Aorta (tissue), 5 donors: ENCODE measurements at regions of chr14 and their contacts with region 1.

Region 1: DNA sequence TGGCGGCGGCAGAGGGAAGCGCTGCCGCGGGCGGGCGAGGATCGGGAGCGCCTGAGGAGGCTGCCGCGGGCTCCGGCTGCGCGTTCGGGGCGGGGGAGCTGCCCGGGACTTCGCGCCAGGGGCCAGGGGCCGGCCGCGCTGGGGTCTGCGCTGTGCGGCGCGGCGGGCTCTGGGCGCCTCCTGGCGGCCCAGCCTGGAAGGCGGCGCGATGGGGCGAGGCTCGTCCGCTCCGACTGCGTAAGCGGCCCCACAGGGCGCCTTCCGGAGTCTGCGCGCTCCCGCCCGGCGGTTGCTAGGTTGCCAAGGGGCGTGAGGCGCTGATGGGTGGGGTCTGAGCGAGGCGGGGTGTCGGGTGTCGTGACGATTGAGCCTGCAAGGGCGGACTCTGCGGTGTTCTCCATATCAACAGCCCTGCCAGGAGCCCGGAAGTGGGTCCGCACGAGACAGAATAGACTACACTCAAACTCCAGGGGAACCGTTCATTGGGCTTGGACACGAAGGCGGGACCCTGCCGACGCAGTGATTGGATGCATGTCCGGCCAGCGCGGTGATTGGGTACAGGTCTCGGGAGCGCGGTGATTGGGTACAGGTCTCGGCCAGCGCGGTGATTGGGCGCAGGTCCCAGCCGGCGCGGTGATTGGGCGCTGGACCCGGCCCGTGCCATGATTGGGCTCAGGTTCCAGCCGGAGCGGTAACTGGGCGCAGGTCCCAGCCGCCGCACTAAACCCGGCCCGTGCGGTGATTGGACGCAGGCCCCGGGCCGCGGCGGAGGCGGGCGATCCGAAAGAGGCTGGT is at the start of gene TEDC1:
- DNase-seq: peak; percentile 99 to 100
- ATAC-seq: peak; percentile 88
- H3K4me3 ChIP-seq: peak within 1 kb of the TSS; percentile 15 to 30
- H3K27ac ChIP-seq: peak within 1 kb of the TSS in 1 of 2 donors; percentile 87
- H3K4me1 ChIP-seq: no peaks in the 10 kb centered on the region
- H3K27me3 ChIP-seq: no peaks in the 10 kb centered on the region
- total RNA-seq, gene TEDC1: 8.6 to 30.5 TPM

Region 2: DNA sequence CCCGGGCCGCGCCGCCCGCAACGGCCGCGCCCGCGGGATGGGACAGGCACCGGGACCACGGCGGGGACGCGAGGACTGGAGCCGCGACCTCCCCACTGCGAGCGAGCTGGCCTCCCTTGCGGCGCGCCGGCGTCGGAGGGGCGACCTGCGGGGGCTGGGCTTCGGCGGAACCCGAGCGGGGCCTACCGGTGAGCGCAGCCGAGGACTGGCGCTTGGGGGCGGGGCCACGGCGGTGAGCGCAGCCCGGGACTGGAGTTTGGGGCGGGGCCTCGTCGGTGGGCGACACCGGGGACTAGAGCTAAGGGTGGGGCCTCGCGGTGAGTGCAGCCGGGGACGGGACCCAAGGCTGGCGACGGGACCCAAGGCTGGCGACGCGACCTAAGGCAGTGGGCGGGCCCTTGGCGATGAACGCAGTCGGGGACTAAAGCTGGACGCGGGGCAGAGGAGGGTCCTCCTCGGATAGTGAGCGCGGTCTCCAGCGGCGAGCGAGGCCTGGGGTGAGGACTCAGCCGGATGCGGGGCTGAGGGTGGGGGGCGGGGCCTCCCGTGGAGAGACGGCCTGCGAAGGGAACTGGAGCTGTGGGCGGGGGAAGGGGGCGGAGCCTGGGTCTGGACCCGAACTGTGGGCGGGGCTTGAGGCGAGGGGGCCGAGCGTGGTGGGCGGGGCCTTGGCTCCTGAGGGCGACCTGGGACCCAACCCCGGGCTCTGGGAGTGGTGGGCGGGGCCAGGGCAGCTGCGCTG is 189.8 kb before region 1 on chr14 and contains the start of gene BRF1:
- intact Hi-C with region 1: loop called in 1 of 2 experiments (anchors 5 kb)
- DNase-seq: peak; percentile 98 to 100
- ATAC-seq: peak; percentile 97
- H3K4me3 ChIP-seq: peak within 1 kb of the TSS; percentile 52 to 76
- H3K27ac ChIP-seq: peak within 1 kb of the TSS in 1 of 2 donors; percentile 83
- H3K4me1 ChIP-seq: no peaks in the 10 kb centered on the region
- H3K27me3 ChIP-seq: no peaks in the 10 kb centered on the region
- total RNA-seq, gene BRF1: 25.2 to 44.3 TPM

Region 3: DNA sequence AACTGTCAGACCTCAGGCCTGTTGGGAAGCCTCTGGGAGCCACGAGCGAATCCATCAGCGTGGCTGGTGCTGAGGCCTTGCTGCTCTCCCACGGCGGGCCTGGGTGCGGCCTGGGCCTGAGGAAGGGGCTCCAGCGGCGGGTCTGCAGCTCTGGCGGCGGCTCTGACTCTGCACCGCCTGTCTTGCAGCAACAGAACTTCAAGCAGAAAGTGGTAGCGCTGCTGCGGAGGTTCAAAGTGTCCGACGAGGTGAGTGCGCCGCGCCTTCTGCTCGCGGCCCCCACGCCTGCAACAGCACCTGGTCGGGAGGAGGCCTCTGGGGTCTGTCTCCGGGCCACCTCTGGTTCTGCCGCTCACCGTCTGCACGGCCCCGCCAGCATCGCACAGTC is 121.1 kb before region 1 on chr14:
- intact Hi-C with region 1: loop called (anchors 2 to 5 kb)
- DNase-seq: no peak
- ATAC-seq: no peak
- H3K4me3 ChIP-seq: no peak overlapping the region
- H3K27ac ChIP-seq: no peak overlapping the region
- H3K4me1 ChIP-seq: no peaks in the 10 kb centered on the region
- H3K27me3 ChIP-seq: no peaks in the 10 kb centered on the region

Region 4: GRCh38 chr14:105375635-105376057 is 115.1 kb before region 1 on chr14:
- intact Hi-C with region 1: loop called (anchors 2 to 5 kb)
- DNase-seq: no peak
- ATAC-seq: no peak
- H3K4me3 ChIP-seq: no peak overlapping the region
- H3K27ac ChIP-seq: no peak overlapping the region
- H3K4me1 ChIP-seq: no peaks in the 10 kb centered on the region
- H3K27me3 ChIP-seq: no peaks in the 10 kb centered on the region

Region 5: GRCh38 chr14:105448706-105449111 is 42.1 kb before region 1 on chr14:
- intact Hi-C with region 1: loop called (anchors 2 kb)
- DNase-seq: peak; percentile 76 to 94
- ATAC-seq: peak; percentile 88
- H3K4me3 ChIP-seq: no peak overlapping the region
- H3K27ac ChIP-seq: no peak overlapping the region
- H3K4me1 ChIP-seq: no peaks in the 10 kb centered on the region
- H3K27me3 ChIP-seq: no peaks in the 10 kb centered on the region

Region 6: GRCh38 chr14:105527661-105528581 is 37.2 kb after region 1 on chr14:
- intact Hi-C with region 1: loop called in 1 of 2 experiments (anchors 5 kb)
- DNase-seq: peak; percentile 87 to 94
- ATAC-seq: peak; percentile 89
- H3K4me3 ChIP-seq: peak overlapping the region; percentile 11 to 49
- H3K27ac ChIP-seq: no peak overlapping the region
- H3K4me1 ChIP-seq: no peaks in the 10 kb centered on the region
- H3K27me3 ChIP-seq: no peaks in the 10 kb centered on the region